ENCODE measurements at regions of chr3 and their contacts with region 1.

Region 1: DNA sequence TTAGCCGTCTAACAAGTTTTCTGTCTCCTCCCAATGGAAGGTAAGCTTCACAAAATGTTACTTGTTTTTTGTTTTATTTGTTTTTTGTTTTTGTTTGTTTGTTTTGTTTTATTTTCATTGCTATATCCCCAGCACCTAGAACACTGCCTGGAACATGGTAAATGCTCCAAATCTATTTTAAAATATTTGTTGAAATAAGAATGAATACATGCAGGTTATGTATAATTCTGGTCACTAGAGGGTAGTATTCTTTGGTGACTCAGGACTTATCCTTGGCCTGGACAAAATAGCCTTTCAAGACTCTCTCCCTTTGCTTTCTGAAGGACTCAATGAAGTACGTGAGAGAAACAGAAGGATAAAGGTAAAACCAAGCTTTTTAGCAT is 47.0 kb upstream of the PPP2R3A start:
- DNase-seq: no peak
- H3K4me3 ChIP-seq: no peak overlapping the region
- H3K27ac ChIP-seq: no peak overlapping the region
- H3K4me1 ChIP-seq: peaks cover 8% of the 10 kb centered on the region
- H3K27me3 ChIP-seq: no peaks in the 10 kb centered on the region
- CTCF ChIP-seq: peak in 1 of 3 experiments; percentile 48
- POLR2A ChIP-seq: no peak

Region 2: DNA sequence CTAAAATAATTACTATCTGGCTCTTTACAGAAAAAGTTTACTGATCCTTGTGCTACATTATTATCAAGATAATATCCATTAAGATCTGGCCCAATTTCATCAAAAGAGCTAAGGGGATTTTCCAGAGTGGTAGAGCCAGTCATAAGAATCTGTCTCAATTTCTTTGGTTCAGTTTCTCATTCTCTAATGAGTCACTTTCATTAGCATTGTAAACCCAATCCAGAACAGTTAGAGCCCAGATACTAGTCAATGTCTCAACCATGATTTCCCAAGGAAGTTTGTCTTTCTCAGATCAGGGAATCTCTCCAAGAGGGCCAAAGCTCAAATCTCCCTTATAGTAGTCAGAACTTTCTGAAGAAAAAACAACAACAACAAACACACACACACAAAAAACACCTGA is 84.1 kb before region 1 on chr3:
- intact Hi-C with region 1: no loop called
- DNase-seq: no peak
- H3K4me3 ChIP-seq: no peak overlapping the region
- H3K27ac ChIP-seq: no peak overlapping the region
- H3K4me1 ChIP-seq: no peaks in the 10 kb centered on the region
- H3K27me3 ChIP-seq: no peaks in the 10 kb centered on the region
- CTCF ChIP-seq: no peak
- POLR2A ChIP-seq: no peak

Region 3: DNA sequence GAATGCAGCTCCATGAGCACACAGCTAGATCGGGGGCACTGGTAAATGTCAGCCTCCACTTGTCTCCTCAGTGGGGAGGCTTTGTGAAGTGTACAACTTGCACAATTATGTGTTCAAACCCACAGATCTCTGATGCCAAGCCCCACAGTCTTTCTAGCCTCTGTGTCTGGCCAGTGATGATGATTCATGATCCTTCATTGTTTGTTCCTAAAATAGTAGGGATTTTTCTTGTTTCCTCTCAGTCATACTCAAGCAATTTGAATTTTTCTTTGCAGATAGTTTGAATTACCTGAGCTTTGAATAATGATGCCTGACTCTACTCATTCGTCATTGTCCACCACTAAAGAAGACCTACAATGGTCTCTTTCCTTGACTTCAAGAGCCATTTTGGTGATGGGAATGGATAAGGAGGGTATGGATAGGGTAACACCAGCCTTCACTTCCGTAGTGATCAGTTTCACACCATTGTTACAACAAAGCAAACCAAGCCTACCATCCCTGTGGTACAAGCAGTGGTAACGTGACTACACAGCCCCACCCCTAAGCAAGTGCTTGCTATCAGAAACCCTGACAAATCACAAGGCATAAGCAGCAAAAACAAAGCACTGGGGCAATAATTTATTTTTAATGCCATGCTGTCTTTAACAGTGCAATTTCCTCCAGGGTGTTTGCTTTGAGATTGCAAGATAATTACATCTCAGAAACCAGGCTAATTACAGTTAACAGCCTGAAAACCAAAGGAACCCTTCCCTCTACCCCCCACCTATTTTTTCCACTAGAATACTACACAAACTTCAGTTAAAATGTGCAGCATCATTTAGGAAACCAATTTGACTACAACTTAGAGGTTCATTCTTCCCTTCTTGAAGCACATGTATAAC is 67.1 kb before region 1 on chr3:
- intact Hi-C with region 1: no loop called
- DNase-seq: no peak
- H3K4me3 ChIP-seq: no peak overlapping the region
- H3K27ac ChIP-seq: no peak overlapping the region
- H3K4me1 ChIP-seq: no peaks in the 10 kb centered on the region
- H3K27me3 ChIP-seq: no peaks in the 10 kb centered on the region
- CTCF ChIP-seq: no peak
- POLR2A ChIP-seq: no peak

Region 4: GRCh38 chr3:136018876-136019275 is 100.3 kb after region 1 on chr3:
- intact Hi-C with region 1: no loop called
- DNase-seq: no peak
- H3K4me3 ChIP-seq: no peak overlapping the region
- H3K27ac ChIP-seq: no peak overlapping the region
- H3K4me1 ChIP-seq: peaks cover 17% of the 10 kb centered on the region
- H3K27me3 ChIP-seq: no peaks in the 10 kb centered on the region
- CTCF ChIP-seq: no peak
- POLR2A ChIP-seq: no peak

Region 5: GRCh38 chr3:136042608-136043221 is 124.1 kb after region 1 on chr3:
- intact Hi-C with region 1: loop called (anchors 10 kb)
- DNase-seq: no peak
- H3K4me3 ChIP-seq: no peak overlapping the region
- H3K27ac ChIP-seq: no peak overlapping the region
- H3K4me1 ChIP-seq: no peaks in the 10 kb centered on the region
- H3K27me3 ChIP-seq: no peaks in the 10 kb centered on the region
- CTCF ChIP-seq: peak in 1 of 3 experiments; percentile 43
- POLR2A ChIP-seq: no peak

Measured in vagina (tissue), 2 donors.